WTC11 (cell line): ENCODE measurements at regions of chr6 and their contacts with region 1.

Region 1: DNA sequence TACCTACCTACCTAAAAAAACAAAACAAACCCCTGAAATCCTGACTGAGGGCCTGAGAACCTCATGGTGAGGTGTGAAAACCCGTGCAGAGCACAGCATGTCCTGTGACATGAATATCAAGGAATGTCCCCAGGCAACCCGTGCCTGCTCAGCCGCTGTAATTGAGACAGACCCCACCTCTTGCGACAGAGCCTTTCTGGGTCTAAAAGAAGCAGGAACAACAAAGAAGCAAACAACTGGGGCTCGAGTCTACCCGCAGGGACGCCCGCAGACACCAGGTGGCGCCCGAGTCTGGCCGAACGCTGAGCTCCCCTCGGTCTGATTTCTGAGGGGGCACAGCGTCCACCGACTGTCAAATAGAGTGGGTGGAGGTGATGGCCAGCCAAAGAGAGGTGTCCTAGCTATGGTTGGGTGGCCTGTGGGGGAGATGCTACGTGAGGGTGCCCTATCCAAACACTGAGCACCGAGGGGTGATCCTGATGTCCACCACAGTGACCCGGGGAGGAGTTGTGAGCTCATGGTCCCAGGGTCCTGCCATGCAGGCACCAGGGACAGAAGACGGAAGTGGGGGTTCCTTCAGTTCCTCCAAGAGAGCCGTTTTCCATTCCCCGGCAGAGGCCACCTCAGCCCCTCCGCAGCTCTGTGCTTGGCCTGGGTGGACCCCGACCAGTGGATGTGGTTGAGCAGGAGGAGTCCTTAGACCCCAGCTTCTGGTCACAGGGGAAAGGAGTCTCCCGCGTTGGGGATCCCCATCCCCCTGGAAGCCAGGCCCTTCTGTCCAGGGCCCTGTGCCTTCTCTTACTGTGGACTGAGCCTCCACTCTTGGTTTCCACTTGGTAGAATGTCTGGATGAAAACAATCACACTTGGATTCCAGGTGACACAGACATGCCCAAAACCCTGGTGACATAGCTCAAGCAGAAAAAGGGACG is 268.2 kb downstream of the CDC5L start:
- DNase-seq: peak; percentile 91
- ATAC-seq: peak; percentile 88
- H3K4me3 Mint-ChIP-seq: no peak overlapping the region
- H3K27ac Mint-ChIP-seq: peak overlapping the region; percentile 40
- H3K4me1 Mint-ChIP-seq: peaks cover 33% of the 10 kb centered on the region
- H3K27me3 Mint-ChIP-seq: no peaks in the 10 kb centered on the region; the same call in 1 of the 2 replicates
- CTCF ChIP-seq: peak; percentile 93

Region 2: DNA sequence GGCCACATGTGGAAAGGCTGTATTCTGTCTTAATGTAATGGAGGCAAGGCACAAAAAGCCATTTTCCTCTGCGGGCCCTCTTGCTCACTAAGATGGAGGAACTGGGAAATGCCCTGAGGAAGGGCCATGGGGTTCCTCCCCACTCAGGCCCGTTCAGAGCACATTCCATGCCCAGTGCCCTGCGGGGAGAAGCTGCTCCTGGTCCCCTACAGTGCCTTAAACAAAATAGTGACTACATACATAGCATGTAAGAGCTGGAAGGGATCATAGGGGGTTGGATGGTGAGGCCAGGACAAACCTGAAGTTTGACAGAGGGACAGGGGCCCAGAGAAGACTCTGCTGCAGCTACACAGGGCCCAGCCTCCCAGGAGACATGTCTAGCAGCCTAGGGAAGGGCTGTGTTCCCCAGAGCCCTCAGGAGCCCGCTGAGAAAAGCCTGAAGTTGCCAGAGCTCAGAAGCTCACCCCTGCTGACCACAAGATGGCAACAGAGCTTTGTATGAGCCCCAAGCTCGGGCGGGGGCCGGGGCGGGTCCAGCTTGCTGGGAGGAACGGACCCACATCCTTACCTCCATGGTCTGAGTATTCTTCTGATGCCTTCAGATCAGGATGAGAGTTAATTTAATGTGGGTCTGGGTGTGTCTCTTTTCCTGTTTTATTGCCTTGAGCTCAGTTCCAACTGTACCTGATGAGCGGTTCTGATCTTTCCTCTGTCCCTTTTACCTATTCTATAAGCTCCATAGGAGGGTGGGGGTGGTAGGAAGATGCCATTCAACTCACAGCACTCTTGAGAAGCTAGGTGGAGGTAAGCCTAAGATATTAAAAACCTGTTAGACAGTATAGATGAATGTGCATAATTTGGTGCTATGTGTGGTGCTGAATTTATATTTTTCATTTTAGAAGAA is 25.3 kb before region 1 on chr6:
- CTCF ChIA-PET with region 1: interaction called, 57 read pairs
- POLR2A ChIA-PET with region 1: no interaction called
- DNase-seq: peak; percentile 78
- ATAC-seq: peak; percentile 89
- H3K4me3 Mint-ChIP-seq: no peak overlapping the region
- H3K27ac Mint-ChIP-seq: no peak overlapping the region
- H3K4me1 Mint-ChIP-seq: peaks cover 41% of the 10 kb centered on the region
- H3K27me3 Mint-ChIP-seq: peaks cover 4% of the 10 kb centered on the region
- CTCF ChIP-seq: 0 out of 2 replicates have a peak, but pooled peaks have one; percentile 33

Region 3: GRCh38 chr6:44667668-44668390 is 12.2 kb after region 1 on chr6:
- CTCF ChIA-PET with region 1: interaction called, 26 read pairs
- POLR2A ChIA-PET with region 1: interaction called, 3 read pairs
- DNase-seq: peak; percentile 68
- ATAC-seq: peak; percentile 65
- H3K4me3 Mint-ChIP-seq: no peak overlapping the region
- H3K27ac Mint-ChIP-seq: peak overlapping the region; percentile 62; the same call in 1 of the 2 replicates
- H3K4me1 Mint-ChIP-seq: peaks cover 86% of the 10 kb centered on the region
- H3K27me3 Mint-ChIP-seq: no peaks in the 10 kb centered on the region
- CTCF ChIP-seq: peak; percentile 75

Region 4: DNA sequence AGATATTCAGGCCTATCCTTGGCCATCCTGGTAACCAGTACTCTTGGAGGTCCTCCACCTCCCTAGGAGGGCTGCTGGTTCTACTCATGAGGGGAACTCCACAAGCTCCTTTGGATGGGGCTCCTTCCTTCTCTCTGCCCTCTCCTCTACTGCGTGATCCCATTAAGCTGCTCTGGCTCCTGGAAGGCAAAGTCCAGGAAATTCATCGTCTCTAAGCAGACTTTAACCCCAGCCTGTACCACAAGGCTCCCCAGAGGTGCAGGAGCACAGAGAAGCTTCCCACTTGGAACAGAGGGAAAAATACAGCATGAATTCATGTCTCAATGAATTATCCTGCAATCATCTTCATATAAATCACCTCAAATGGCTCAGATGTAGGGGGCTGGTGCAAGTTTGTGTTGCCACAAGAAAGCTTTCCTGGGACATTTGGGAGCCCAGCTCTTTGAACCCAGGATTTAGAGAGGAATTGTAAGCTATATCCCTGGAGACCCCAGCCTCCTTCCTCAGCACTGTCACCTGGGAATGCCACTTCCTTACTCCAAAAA is 87.2 kb after region 1 on chr6:
- CTCF ChIA-PET with region 1: interaction called, 11 read pairs
- POLR2A ChIA-PET with region 1: no interaction called
- DNase-seq: no peak
- ATAC-seq: no peak
- H3K4me3 Mint-ChIP-seq: no peak overlapping the region
- H3K27ac Mint-ChIP-seq: no peak overlapping the region
- H3K4me1 Mint-ChIP-seq: peaks cover 22% of the 10 kb centered on the region
- H3K27me3 Mint-ChIP-seq: peaks cover 2% of the 10 kb centered on the region; the same call in 1 of the 2 replicates
- CTCF ChIP-seq: no peak

Region 5: GRCh38 chr6:44771647-44772415 is 116.2 kb after region 1 on chr6:
- CTCF ChIA-PET with region 1: interaction called, 11 read pairs
- POLR2A ChIA-PET with region 1: no interaction called
- DNase-seq: no peak
- ATAC-seq: peak; percentile 93
- H3K4me3 Mint-ChIP-seq: 0 out of 2 replicates have a peak overlapping the region, but pooled peaks have one; percentile 7
- H3K27ac Mint-ChIP-seq: peak overlapping the region; percentile 21
- H3K4me1 Mint-ChIP-seq: peaks cover 29% of the 10 kb centered on the region
- H3K27me3 Mint-ChIP-seq: no peaks in the 10 kb centered on the region
- CTCF ChIP-seq: no peak

Region 6: DNA sequence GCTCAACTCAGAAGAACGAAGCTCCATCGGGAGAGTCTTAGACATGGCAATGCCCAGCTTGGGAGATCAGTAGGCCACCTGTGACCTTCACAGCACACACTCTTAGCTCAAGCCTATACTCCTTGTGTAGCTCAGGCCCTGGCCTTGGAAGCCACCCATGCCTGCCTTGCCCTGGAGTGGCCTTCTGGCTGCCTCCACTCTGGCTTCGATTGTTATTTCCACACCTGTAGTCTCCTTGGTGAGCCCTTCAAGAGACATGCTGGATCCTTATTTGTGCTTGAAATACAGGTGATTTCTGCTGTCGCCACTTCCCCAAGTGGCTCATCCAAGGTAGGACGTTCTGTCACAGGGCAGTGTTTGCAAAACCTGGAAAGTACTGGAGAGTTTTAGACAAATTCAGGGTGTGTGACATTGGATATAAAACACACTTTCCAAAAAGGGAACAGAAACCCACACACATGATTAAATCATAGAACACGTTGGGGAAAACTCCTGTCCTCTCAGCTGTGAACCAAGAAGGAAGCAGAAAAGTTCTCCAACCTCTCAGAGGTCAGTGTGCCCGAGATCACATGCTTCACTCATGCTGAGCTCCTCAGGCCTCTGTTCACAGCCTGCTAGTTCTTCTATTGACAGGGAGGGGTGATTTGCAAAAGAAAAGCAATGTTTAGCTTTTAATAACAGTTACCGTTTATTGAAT is 123.6 kb after region 1 on chr6:
- CTCF ChIA-PET with region 1: interaction called, 24 read pairs
- POLR2A ChIA-PET with region 1: no interaction called
- DNase-seq: no peak
- ATAC-seq: no peak
- H3K4me3 Mint-ChIP-seq: no peak overlapping the region
- H3K27ac Mint-ChIP-seq: no peak overlapping the region
- H3K4me1 Mint-ChIP-seq: peaks cover 12% of the 10 kb centered on the region
- H3K27me3 Mint-ChIP-seq: no peaks in the 10 kb centered on the region
- CTCF ChIP-seq: no peak

Region 7: GRCh38 chr6:45922728-45923351 is 1267.2 kb after region 1 on chr6:
- CTCF ChIA-PET with region 1: interaction called, 15 read pairs
- POLR2A ChIA-PET with region 1: no interaction called
- DNase-seq: peak; percentile 75
- ATAC-seq: peak; percentile 83
- H3K4me3 Mint-ChIP-seq: no peak overlapping the region
- H3K27ac Mint-ChIP-seq: no peak overlapping the region
- H3K4me1 Mint-ChIP-seq: peaks cover 34% of the 10 kb centered on the region
- H3K27me3 Mint-ChIP-seq: peaks cover 11% of the 10 kb centered on the region; the same call in 1 of the 2 replicates
- CTCF ChIP-seq: peak; percentile 50